Astrocyte of the cerebellum (primary cell): ENCODE measurements at regions of chr21 and their contacts with region 1.

Region 1: DNA sequence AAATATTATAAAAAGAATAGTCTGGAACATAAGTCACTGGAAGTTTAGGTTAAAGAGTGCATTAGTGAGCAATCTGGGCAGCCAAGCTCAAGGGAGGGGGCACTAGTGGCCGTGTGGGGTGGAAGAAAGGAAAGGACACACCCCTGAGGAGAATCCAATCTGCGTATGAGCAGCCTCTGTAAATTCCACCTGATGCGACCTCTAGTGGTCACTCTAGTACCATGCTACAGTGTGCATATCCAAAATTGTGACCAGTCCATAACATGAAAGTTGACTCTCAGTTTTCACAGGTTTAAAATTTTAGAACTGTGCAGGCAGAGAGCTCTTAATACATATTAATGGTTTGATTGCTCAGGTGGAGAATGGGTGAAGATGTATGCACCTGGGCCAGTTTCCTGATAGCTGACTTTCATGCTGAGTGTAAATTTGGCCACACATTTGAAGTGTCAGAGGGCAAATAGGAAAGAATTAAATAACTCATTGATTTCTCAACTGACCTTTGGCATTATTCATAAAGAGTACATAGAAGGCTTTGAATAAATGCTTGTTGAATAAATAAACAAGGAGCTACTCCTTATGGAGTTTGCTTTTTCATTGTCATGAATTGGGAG is 105.9 kb upstream of the C21orf91 start:
- DNase-seq: no peak
- H3K4me3 ChIP-seq: no peak overlapping the region
- CTCF ChIP-seq: peak; percentile 91

Region 2: GRCh38 chr21:17660449-17660848 is 264.7 kb before region 1 on chr21:
- in situ Hi-C with region 1: loop called (anchors 25 kb)
- DNase-seq: peak; percentile 66
- H3K4me3 ChIP-seq: no peak overlapping the region
- CTCF ChIP-seq: no peak